T-cell (primary cell): ENCODE measurements at regions of chr6 and their contacts with region 1.

Region 1: DNA sequence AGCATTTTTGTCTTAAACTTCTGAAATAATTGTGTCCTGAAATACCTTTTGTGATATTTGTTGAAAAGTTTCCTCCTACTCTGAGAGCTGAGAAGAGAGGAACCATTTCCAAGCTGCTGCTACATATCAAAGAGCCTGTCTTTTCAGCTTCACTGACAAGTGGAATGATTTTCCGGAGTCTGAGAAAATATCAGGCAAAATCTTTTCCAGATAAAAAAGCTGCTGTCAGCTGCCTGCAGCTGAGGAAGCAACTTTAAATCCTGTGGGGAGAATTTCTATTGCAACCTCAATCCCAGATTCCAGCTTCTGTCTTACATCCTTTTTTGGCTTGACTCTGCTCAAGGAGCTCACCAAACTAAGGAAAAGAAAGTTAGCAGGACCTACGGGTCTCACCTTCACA is 904.3 kb downstream of the PHF3 start:
- DNase-seq: no peak
- ATAC-seq: no peak
- H3K4me3 ChIP-seq: no peak overlapping the region
- H3K4me3 Mint-ChIP-seq: no peak overlapping the region
- H3K27ac ChIP-seq: no peak overlapping the region
- H3K27ac Mint-ChIP-seq: no peak overlapping the region
- H3K4me1 ChIP-seq: no peaks in the 10 kb centered on the region
- H3K4me1 Mint-ChIP-seq: no peaks in the 10 kb centered on the region
- H3K27me3 ChIP-seq: no peaks in the 10 kb centered on the region
- H3K27me3 Mint-ChIP-seq: no peaks in the 10 kb centered on the region

Region 2: GRCh38 chr6:64602993-64603392 is 63.1 kb after region 1 on chr6:
- CTCF ChIA-PET with region 1: no interaction called
- POLR2A ChIA-PET with region 1: interaction called in 1 of 2 experiments, 10 read pairs
- DNase-seq: no peak
- ATAC-seq: no peak
- H3K4me3 ChIP-seq: no peak overlapping the region
- H3K4me3 Mint-ChIP-seq: no peak overlapping the region
- H3K27ac ChIP-seq: no peak overlapping the region
- H3K27ac Mint-ChIP-seq: no peak overlapping the region
- H3K4me1 ChIP-seq: no peaks in the 10 kb centered on the region
- H3K4me1 Mint-ChIP-seq: no peaks in the 10 kb centered on the region
- H3K27me3 ChIP-seq: no peaks in the 10 kb centered on the region
- H3K27me3 Mint-ChIP-seq: no peaks in the 10 kb centered on the region